ENCODE measurements at regions of chr11 and their contacts with region 1.

Region 1: GRCh38 chr11:66288671-66289547 is at the start of gene YIF1A:
- H3K4me3 ChIP-seq: peak within 1 kb of the TSS; percentile 79
- H3K27ac ChIP-seq: peak within 1 kb of the TSS; percentile 44; the same call in 1 of the 2 replicates
- H3K4me1 ChIP-seq: no peaks in the 10 kb centered on the region
- CTCF ChIP-seq: peak; percentile 30; the same call in 1 of the 2 replicates

Region 2: DNA sequence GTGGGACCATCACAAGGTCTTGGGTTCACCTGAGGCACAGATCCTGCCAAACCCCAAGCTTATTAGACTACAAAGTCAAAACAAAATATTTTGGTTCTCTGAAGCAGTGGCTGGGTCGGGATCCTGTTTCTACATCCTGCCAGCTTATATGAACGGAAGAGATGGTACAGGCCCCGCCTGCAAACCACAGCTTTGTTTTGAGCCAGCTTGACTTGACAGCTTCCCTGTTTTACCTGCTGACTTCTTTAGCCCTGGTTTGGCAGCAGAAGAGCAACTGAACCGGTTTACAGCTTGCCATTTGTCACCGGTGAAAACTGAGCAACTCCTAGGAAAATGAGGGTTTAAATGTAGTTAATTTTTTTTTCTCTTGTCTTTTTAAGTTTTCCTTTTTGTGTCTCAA is 207.4 kb before region 1 on chr11:
- CTCF ChIA-PET with region 1: no interaction called
- POLR2A ChIA-PET with region 1: no interaction called
- H3K4me3 ChIP-seq: no peak overlapping the region
- H3K27ac ChIP-seq: no peak overlapping the region
- H3K4me1 ChIP-seq: peaks cover 21% of the 10 kb centered on the region
- CTCF ChIP-seq: no peak

Region 3: DNA sequence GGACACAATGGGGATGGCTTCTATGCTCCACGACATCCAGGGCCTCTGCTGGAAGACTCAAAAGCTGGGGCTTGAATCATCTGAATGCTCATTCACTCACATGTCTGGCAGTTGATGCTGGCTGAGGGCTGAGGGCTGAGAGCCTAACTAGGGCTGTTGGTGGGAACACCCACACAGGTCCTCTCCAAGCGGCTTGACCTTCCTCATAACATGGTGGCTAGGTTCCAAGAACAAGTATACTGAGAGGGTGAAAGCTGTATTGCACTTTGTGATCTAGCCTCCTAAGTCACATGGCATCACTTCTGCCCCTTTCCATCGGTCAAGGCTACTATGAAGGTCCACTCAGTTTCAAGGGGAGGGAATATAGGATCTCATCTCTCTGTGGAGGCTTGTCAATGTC is 10.3 kb after region 1 on chr11:
- CTCF ChIA-PET with region 1: interaction called, 4 read pairs
- POLR2A ChIA-PET with region 1: interaction called, 13 read pairs
- H3K4me3 ChIP-seq: no peak overlapping the region
- H3K27ac ChIP-seq: no peak overlapping the region
- H3K4me1 ChIP-seq: no peaks in the 10 kb centered on the region
- CTCF ChIP-seq: no peak